CD8-positive, alpha-beta T cell (primary cell): ENCODE measurements at regions of chr7 and their contacts with region 1.

Region 1: GRCh38 chr7:3673524-3673923 is 372.5 kb downstream of the SDK1 start:
- DNase-seq: peak in 8 of 9 experiments; percentile 21 to 66 (median 52)
- ATAC-seq: no peak
- H3K4me3 ChIP-seq: no peak overlapping the region
- H3K4me3 Mint-ChIP-seq: no peak overlapping the region
- H3K27ac ChIP-seq: no peak overlapping the region
- H3K27ac Mint-ChIP-seq: no peak overlapping the region
- H3K4me1 ChIP-seq: peaks cover 15% of the 10 kb centered on the region
- H3K4me1 Mint-ChIP-seq: peaks cover 2% of the 10 kb centered on the region
- H3K27me3 ChIP-seq: no peaks in the 10 kb centered on the region
- H3K27me3 Mint-ChIP-seq: peaks cover 4% of the 10 kb centered on the region
- CTCF ChIP-seq: no peak

Region 2: DNA sequence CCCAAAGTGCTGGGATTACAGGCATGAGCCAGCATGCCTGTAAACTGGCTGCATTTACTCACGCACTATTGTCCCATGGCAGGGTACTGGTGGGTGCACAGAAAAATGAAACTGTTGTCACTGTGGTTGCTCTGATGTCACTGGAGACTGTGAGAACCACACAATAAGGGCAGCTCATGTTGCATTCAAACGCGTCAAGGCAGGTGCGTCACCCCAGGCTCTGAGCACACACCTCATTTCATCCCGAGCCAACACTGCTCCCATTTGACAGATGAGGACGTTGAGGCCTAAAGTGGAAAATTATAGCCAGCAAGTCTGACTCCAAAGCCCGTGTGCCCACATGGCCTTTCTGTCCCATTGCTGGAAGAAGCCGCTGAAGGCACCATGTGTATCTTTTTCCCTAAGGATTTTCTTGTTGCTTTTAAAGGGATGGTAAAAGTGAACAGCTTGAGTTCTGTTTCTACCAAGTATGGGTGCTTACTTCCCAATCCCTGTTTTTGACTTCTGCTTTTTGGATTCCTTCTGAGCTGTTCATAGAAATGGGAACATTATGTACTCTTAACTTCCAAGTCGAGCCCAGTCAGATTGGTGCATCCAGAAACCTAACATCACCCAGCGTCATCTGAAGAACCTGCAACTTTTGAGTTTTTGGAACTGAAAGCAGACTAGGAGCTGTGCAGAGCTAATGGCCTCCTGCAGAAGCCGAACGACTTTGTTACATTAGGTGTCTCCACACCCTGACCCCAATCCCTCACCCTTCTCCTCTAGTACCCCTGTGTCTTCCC is 569.7 kb before region 1 on chr7:
- CTCF ChIA-PET with region 1: no interaction called
- POLR2A ChIA-PET with region 1: no interaction called
- intact Hi-C with region 1: no loop called
- DNase-seq: peak in 3 of 9 experiments; percentile 56 to 83 (median 67)
- ATAC-seq: peak; percentile 80
- H3K4me3 ChIP-seq: no peak overlapping the region
- H3K4me3 Mint-ChIP-seq: no peak overlapping the region
- H3K27ac ChIP-seq: no peak overlapping the region
- H3K27ac Mint-ChIP-seq: peak overlapping the region; percentile 81
- H3K4me1 ChIP-seq: peaks cover 46% of the 10 kb centered on the region
- H3K4me1 Mint-ChIP-seq: peaks cover 66% of the 10 kb centered on the region
- H3K27me3 ChIP-seq: no peaks in the 10 kb centered on the region
- H3K27me3 Mint-ChIP-seq: no peaks in the 10 kb centered on the region
- CTCF ChIP-seq: no peak

Region 3: GRCh38 chr7:3399858-3400257 is 273.7 kb before region 1 on chr7:
- CTCF ChIA-PET with region 1: no interaction called
- POLR2A ChIA-PET with region 1: no interaction called
- intact Hi-C with region 1: loop called in 1 of 2 experiments (anchors 10 kb)
- DNase-seq: peak in 2 of 9 experiments; percentile 8 to 35
- ATAC-seq: no peak
- H3K4me3 ChIP-seq: no peak overlapping the region
- H3K4me3 Mint-ChIP-seq: no peak overlapping the region
- H3K27ac ChIP-seq: no peak overlapping the region
- H3K27ac Mint-ChIP-seq: no peak overlapping the region
- H3K4me1 ChIP-seq: no peaks in the 10 kb centered on the region
- H3K4me1 Mint-ChIP-seq: no peaks in the 10 kb centered on the region
- H3K27me3 ChIP-seq: peaks cover 0 to 2% of the 10 kb centered on the region in 2 experiments
- H3K27me3 Mint-ChIP-seq: peaks cover 2% of the 10 kb centered on the region
- CTCF ChIP-seq: no peak

Region 4: DNA sequence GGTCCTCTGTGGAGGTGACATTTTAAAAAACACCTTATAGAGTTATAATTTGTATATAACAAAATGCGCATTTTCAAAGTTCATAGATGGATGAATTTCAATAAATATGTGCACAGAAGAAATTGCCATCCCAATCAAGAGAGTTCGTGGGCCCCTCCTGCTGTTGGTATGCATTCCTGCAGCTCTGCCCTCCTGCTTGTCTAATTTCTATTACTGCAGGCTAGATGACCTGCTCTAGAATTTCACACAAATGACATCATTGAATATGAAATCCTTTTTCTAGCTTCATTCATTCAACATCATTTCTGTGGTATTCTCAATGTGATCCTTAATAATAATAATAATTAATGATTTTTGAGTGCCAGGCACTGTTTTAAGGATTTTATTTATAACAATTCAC is 24.3 kb before region 1 on chr7:
- CTCF ChIA-PET with region 1: no interaction called
- POLR2A ChIA-PET with region 1: no interaction called
- intact Hi-C with region 1: no loop called
- DNase-seq: peak in 1 of 9 experiments; percentile 8
- ATAC-seq: no peak
- H3K4me3 ChIP-seq: no peak overlapping the region
- H3K4me3 Mint-ChIP-seq: no peak overlapping the region
- H3K27ac ChIP-seq: no peak overlapping the region
- H3K27ac Mint-ChIP-seq: no peak overlapping the region
- H3K4me1 ChIP-seq: no peaks in the 10 kb centered on the region
- H3K4me1 Mint-ChIP-seq: no peaks in the 10 kb centered on the region
- H3K27me3 ChIP-seq: no peaks in the 10 kb centered on the region
- H3K27me3 Mint-ChIP-seq: no peaks in the 10 kb centered on the region
- CTCF ChIP-seq: no peak

Region 5: GRCh38 chr7:3697472-3697871 is 23.9 kb after region 1 on chr7:
- CTCF ChIA-PET with region 1: no interaction called
- POLR2A ChIA-PET with region 1: no interaction called
- intact Hi-C with region 1: no loop called
- DNase-seq: no peak
- ATAC-seq: no peak
- H3K4me3 ChIP-seq: no peak overlapping the region
- H3K4me3 Mint-ChIP-seq: no peak overlapping the region
- H3K27ac ChIP-seq: no peak overlapping the region
- H3K27ac Mint-ChIP-seq: no peak overlapping the region
- H3K4me1 ChIP-seq: no peaks in the 10 kb centered on the region
- H3K4me1 Mint-ChIP-seq: peaks cover 10% of the 10 kb centered on the region
- H3K27me3 ChIP-seq: no peaks in the 10 kb centered on the region
- H3K27me3 Mint-ChIP-seq: peaks cover 6% of the 10 kb centered on the region
- CTCF ChIP-seq: no peak